Left cardiac atrium (tissue), 4 donors: ENCODE measurements at regions of chr11 and their contacts with region 1.

Region 1: DNA sequence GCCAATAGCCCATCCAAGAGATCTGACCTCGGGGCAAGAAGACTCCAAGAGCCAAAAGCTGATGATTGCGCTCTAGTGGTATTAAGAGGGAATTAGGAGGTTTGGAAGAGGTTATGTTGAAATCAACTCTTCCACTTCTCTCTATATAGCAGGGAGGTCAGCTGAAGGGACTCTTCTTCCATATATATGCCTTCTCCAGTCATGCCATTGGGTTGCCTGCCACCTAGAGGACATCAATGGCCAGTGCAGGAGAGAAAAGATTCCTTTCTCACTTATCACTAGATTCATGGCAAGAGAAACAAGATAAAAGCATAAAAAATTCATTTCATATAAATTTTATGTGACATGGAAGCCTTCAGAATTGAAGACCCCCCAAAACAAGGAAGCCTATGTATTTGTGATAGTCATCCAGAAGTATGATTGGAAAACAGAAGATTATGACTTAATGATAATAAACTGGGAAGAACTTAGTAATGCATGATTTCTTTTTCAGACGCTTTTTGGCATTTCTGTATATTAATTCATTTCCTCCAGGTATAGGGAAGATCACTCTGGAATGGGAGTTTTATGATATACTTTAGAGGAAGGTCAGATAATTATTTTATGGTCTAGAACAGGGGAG is 435.1 kb upstream of the DDI1 start:
- DNase-seq: no peak
- ATAC-seq: peak; percentile 67 to 74

Region 2: DNA sequence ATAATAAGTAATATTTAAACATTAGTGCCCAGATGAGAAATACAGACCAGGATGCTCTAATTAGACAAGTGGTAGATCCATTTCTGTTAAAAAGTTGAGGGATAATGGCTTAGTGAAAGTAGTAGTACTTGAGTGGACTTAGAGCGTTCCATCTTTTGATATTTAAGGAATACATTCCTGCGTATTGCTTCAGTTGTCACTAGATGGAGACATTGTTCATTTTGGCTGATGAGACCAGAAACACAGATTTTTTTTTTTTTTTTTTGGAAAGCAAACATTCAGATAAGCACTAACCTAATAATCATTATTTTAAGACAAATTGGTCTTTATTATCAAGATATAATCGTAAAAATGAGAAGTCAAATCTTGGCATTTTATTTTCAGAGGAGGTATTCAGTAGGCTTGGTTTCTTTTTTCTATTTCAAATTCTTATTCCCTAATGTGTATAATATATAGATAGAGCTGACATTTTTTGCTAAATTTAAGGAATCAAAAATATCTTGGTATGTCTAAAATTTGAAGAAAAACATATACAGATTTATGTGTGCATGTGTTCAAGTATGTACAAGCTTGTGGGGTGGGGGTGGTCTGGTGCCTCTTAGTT is 399.2 kb before region 1 on chr11:
- intact Hi-C with region 1: loop called in 1 of 2 experiments (anchors 10 kb)
- DNase-seq: no peak
- ATAC-seq: no peak

Region 3: DNA sequence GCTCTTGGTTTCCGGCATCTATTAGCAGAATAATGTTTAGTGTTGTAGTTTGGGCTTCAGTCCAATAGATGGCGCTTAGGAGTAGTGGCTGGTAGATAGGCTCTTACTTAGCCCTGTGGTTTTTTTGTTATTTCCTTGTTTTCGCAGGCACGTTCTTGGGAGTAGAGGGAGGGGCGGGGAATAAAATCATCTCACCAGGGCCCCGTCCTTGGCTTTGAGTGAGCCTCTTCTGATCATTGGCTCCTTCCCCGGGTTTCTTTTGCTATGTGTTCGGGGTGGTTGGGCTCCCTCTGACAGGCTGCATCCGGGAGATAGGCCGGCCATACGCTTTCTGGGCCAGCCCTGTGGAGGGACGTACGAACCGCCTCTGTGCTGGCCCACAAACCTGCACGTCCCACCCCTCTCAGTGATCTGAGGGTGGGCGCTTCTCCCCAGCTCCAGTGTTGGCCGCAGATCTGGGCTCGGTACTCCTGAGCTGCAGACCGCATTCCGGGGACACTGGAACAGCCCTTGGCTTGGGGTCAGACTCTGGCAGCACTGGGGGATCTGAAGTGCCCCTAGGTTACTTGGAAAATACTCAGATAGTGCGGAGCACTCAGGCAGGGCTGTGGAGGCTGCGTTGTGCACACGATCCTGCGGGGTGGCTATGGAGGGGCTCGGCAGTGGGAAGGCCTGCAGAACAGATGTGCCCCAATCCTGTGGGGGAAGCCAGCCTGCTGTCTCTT is 275.1 kb before region 1 on chr11:
- intact Hi-C with region 1: loop called (anchors 1 to 10 kb)
- DNase-seq: peak; percentile 30
- ATAC-seq: peak; percentile 84 to 86

Region 4: DNA sequence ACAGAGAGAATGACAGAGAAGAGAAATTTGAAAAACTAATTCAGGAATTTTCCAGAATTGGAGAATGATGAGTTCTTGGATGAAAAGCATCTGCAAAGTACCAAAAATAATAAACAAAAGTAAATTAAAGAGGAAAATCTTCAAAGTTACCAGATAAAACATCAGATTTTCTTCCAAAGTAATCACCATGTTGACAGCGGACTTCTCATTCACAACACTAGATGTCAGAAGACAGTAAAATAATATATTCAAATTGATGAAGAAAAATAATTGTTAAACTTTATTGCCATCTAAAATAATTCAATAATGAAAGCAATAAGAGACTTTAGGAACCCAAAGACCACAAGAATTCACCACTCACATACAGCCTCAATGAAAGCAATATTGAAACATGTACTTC is 136.9 kb before region 1 on chr11:
- intact Hi-C with region 1: loop called in 1 of 2 experiments (anchors 5 kb)
- DNase-seq: no peak
- ATAC-seq: no peak